ENCODE measurements at regions of chr14 and their contacts with region 1.

Region 1: GRCh38 chr14:79467835-79468234 is 743.5 kb downstream of the DIO2 start:
- DNase-seq: no peak
- H3K4me3 ChIP-seq: no peak overlapping the region
- H3K27ac ChIP-seq: no peak overlapping the region
- H3K4me1 ChIP-seq: no peaks in the 10 kb centered on the region
- H3K27me3 ChIP-seq: no peaks in the 10 kb centered on the region
- CTCF ChIP-seq: no peak
- POLR2A ChIP-seq: no peak

Region 2: GRCh38 chr14:79510659-79511058 is 42.8 kb after region 1 on chr14:
- intact Hi-C with region 1: no loop called
- DNase-seq: no peak
- H3K4me3 ChIP-seq: no peak overlapping the region
- H3K27ac ChIP-seq: no peak overlapping the region
- H3K4me1 ChIP-seq: no peaks in the 10 kb centered on the region
- H3K27me3 ChIP-seq: no peaks in the 10 kb centered on the region
- CTCF ChIP-seq: no peak
- POLR2A ChIP-seq: no peak

Region 3: DNA sequence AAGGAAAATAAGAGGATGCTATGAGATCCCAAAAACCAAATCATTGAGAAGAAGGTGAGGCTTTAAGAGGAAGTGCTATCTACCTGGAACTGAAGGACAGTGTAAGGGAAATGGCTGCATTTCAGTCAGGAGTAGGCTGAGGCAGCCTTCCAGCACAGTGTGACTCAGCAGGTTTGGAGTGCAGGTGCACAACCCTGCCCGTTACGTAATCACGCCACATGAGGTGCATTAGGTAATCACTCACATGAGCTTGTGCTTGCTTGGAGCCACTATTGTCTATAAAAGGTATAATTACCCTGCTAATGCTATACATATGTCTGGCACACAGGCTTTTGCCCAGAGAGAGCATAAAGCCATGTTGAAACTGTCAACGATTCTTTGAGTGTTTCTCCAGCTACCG is 668.5 kb after region 1 on chr14:
- intact Hi-C with region 1: loop called (anchors 10 kb)
- DNase-seq: no peak
- H3K4me3 ChIP-seq: no peak overlapping the region
- H3K27ac ChIP-seq: no peak overlapping the region
- H3K4me1 ChIP-seq: no peaks in the 10 kb centered on the region
- H3K27me3 ChIP-seq: no peaks in the 10 kb centered on the region
- CTCF ChIP-seq: no peak
- POLR2A ChIP-seq: no peak

Region 4: DNA sequence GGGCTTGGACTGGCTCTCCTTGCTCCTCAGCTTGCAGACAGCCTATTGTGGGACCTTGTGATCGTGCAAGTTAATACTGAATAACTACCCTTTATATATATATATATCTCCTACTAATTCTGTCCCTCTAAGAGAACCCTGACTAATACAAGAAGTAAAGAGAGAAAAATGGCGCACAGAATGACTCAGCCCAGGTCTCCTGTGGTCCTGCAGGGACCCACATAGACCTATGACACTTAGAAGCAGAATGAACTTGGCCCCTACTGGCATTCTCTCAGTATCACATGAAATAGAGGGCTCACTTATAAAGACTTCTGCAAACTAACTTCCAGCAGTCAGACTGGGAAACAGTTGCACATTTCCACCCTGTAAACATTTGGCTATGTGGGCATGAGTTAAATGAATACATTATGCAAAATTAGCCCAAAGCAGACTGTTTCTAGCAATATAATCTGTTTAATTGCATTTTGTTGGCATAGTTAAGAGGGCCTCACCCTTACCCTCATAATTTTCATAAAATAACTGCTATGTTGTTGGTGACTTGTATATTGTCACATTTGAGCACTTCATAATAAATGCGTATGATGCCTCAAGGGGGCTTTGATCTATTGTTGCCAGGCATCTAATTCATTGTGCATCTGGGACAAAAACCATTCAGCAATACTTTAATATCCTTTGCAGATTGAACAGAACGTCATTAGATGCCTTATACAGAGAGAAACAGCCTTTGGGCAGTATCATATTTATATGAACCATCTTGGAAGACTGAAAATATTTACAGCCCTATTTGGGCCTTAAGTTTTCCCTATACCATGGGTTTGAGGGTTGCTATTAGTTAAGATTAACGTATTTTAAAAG is 1093.2 kb after region 1 on chr14:
- intact Hi-C with region 1: no loop called
- DNase-seq: no peak
- H3K4me3 ChIP-seq: no peak overlapping the region
- H3K27ac ChIP-seq: no peak overlapping the region
- H3K4me1 ChIP-seq: no peaks in the 10 kb centered on the region
- H3K27me3 ChIP-seq: no peaks in the 10 kb centered on the region
- CTCF ChIP-seq: no peak
- POLR2A ChIP-seq: no peak